ENCODE measurements at regions of chr21 and their contacts with region 1.

Region 1: GRCh38 chr21:42002421-42002958 is 7.7 kb downstream of the ZBTB21 start:
- DNase-seq: peak; percentile 91
- H3K4me3 Mint-ChIP-seq: peak overlapping the region; percentile 33
- H3K27ac Mint-ChIP-seq: peak overlapping the region; percentile 94
- H3K4me1 Mint-ChIP-seq: peaks cover 52% of the 10 kb centered on the region
- H3K27me3 Mint-ChIP-seq: peaks cover 2% of the 10 kb centered on the region

Region 2: DNA sequence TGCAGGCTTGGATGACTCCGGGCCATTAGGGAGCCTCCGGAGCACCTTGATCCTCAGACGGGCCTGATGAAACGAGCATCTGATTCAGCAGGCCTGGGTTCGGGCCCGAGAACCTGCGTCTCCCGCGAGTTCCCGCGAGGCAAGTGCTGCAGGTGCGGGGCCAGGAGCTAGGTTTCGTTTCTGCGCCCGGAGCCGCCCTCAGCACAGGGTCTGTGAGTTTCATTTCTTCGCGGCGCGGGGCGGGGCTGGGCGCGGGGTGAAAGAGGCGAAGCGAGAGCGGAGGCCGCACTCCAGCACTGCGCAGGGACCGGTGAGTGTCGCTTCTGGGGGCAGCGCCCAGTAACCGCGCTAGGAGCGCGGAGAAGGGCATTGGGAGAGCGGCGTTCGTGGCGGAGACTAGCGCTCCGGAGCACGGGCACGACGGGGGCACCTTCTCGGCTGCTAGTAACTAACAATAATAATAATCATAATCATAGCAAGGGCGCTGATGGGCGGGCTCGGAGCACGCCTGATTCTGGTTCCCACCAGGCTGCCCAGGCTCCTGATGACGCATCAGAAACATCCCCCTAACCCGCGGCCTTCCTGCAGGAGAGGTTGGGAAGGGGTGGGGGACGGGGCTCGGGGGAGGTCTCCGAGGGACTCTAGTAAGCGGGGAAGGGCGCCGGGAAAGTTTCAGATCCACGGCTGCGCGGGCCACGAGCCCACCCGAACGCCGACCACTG is 576.4 kb before region 1 on chr21 and contains the start of gene MX1:
- intact Hi-C with region 1: loop called (anchors 5 kb)
- DNase-seq: peak; percentile 98
- H3K4me3 Mint-ChIP-seq: peak within 1 kb of the TSS; percentile 97
- H3K27ac Mint-ChIP-seq: peak within 1 kb of the TSS; percentile 98
- H3K4me1 Mint-ChIP-seq: peaks cover 78% of the 10 kb centered on the region
- H3K27me3 Mint-ChIP-seq: no peaks in the 10 kb centered on the region
- total RNA-seq, gene MX1: 88.8 and 90.5 TPM in 2 replicates

Region 3: DNA sequence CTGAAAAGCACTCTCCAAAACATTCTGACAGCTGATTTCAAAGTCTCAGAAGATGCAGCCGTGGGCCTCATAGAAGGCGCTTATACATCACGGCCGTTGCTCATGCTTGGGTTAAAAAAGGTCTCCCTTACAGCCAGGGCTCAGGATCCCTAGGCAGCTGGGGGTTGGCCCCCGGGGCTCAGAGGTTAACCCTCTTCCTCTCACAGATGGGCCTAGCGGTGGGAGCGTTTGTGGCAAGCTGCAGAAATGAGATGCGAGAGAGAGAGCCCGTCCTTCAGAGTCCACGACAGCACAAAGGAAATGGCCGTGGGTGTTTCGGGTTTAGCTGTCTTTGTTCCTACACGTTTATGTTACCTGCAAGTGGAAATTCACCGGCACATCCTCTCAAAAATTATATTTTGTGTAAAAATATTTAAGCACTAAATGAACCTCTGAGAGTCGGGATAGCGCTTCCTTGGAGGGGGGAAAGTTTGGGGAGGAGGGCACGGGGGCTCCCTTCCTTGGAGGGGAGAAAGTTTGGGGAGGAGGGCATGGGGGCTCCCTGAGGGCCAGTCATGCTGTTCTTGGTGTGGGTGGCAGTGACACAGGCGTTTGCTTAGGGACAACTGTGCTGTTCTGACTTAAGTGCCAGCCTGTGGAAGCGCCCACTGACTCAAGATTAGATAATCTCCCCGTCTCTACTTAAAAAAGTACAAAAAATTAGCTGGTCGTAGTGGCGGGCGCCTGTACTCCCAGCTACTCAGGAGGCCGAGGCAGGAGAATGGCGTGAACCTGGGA is 102.9 kb before region 1 on chr21:
- intact Hi-C with region 1: loop called (anchors 1 kb)
- DNase-seq: peak; percentile 76
- H3K4me3 Mint-ChIP-seq: peak overlapping the region; percentile 61
- H3K27ac Mint-ChIP-seq: peak overlapping the region; percentile 84
- H3K4me1 Mint-ChIP-seq: peaks cover 28% of the 10 kb centered on the region
- H3K27me3 Mint-ChIP-seq: no peaks in the 10 kb centered on the region

Region 4: GRCh38 chr21:41957991-41958766 is 44.3 kb before region 1 on chr21:
- intact Hi-C with region 1: loop called (anchors 5 kb)
- DNase-seq: no peak
- H3K4me3 Mint-ChIP-seq: no peak overlapping the region
- H3K27ac Mint-ChIP-seq: no peak overlapping the region
- H3K4me1 Mint-ChIP-seq: peaks cover 13% of the 10 kb centered on the region
- H3K27me3 Mint-ChIP-seq: peaks cover 20% of the 10 kb centered on the region

Region 5: GRCh38 chr21:42233067-42233961 is 230.8 kb after region 1 on chr21:
- intact Hi-C with region 1: loop called (anchors 5 kb)
- DNase-seq: peak; percentile 93
- H3K4me3 Mint-ChIP-seq: peak overlapping the region; percentile 82
- H3K27ac Mint-ChIP-seq: peak overlapping the region; percentile 97
- H3K4me1 Mint-ChIP-seq: peaks cover 84% of the 10 kb centered on the region
- H3K27me3 Mint-ChIP-seq: no peaks in the 10 kb centered on the region

Region 6: DNA sequence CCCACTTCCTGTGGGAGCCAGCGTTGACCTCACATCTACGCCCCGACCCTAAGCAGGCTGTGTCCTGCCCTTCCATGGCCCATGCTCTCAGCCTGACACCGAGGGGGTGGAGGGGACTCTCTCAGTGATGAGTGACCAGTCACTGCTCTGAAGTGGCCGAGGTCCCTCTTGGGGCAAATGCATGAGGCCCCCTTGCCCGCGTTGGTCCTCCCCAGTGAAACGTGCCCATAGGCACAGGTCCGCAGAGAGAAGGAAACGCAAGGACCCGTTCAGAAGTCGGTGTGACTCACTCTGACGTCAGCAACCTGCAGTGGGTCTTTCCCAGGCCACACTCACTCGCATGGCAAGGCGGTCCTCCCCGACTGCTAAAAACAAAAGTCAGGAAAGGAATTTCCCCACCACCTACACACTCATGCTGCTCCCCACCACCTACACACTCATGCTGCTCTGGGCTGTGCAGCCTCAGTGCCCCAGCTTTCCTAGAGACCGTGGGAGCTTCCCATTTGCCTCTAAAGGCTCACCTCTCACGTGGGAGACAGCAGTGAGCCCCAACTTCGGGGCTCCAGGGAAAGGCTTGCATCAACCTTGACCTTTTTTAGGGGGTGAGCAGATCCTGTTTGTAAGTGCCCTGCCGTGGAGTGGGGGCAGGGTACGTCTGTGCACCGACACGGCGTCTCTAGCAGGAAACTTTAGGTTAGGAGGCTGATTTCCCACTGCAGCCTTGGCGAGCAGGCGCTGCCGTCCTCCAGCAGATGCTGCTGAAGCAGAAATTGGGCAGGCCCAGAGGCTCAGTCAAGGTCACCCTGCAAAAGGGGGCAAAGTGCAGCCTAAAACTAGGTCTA is 412.7 kb after region 1 on chr21:
- intact Hi-C with region 1: loop called (anchors 5 kb)
- DNase-seq: peak; percentile 96
- H3K4me3 Mint-ChIP-seq: peak overlapping the region; percentile 77
- H3K27ac Mint-ChIP-seq: peak overlapping the region; percentile 99
- H3K4me1 Mint-ChIP-seq: peaks cover 58% of the 10 kb centered on the region
- H3K27me3 Mint-ChIP-seq: no peaks in the 10 kb centered on the region